ENCODE measurements at regions of chr2 and their contacts with region 1.

Region 1: DNA sequence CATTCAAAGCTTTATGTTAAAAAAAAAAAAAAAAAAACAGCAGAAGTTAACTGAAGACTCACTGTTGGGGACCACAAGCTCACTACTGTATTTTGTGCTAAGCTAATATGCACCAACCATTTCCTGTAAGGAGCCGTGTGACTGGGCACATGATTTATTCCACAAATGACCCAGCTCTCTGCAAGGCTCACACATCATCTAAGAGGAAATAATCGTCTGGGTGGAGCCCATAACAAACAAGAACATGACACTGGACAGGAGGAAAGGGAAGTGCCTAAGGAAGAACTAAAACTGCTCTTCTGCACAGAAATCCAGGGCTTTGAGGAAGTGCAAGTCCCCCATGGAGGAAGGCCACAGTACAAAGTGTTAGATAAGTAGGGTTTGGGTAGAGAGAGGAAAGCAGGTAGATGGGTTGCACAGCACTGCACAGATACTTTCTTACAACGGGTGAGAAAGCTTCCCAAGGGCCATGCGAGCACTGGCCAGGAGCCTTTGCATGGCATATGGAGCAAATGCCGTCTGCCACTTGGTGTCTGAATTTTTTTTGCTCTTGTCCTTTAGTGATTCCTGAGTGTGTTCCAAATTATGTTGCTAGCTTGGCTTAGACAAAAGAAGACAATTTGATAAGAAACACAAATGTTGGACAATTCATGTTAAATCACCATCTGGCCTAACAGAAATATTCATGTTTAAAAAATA is 24.4 kb downstream of the NFE2L2 start:
- DNase-seq: peak in 2 of 9 donors; percentile 28 to 40
- ATAC-seq: peak; percentile 91
- H3K4me3 ChIP-seq: no peak overlapping the region
- H3K4me3 Mint-ChIP-seq: peak overlapping the region; percentile 46 to 84 (median 67)
- H3K27ac ChIP-seq: peak overlapping the region; percentile 64
- H3K27ac Mint-ChIP-seq: peak overlapping the region; percentile 78 to 90 (median 86)
- H3K4me1 ChIP-seq: peaks cover 38 to 52% of the 10 kb centered on the region in 2 donors
- H3K4me1 Mint-ChIP-seq: peaks cover 60 to 91% (median 79%) of the 10 kb centered on the region in 7 donors
- H3K27me3 ChIP-seq: no peaks in the 10 kb centered on the region
- H3K27me3 Mint-ChIP-seq: no peaks in the 10 kb centered on the region

Region 2: GRCh38 chr2:177229448-177230242 is 10.4 kb before region 1 on chr2:
- CTCF ChIA-PET with region 1: no interaction called
- POLR2A ChIA-PET with region 1: interaction called, 3 read pairs
- intact Hi-C with region 1: loop called in 1 of 2 experiments (anchors 1 kb)
- DNase-seq: no peak
- ATAC-seq: no peak
- H3K4me3 ChIP-seq: no peak overlapping the region
- H3K4me3 Mint-ChIP-seq: no peak overlapping the region
- H3K27ac ChIP-seq: no peak overlapping the region
- H3K27ac Mint-ChIP-seq: peak overlapping the region; percentile 36 to 87 (median 74)
- H3K4me1 ChIP-seq: no peaks in the 10 kb centered on the region
- H3K4me1 Mint-ChIP-seq: peaks cover 21 to 57% (median 53%) of the 10 kb centered on the region in 7 donors
- H3K27me3 ChIP-seq: no peaks in the 10 kb centered on the region
- H3K27me3 Mint-ChIP-seq: no peaks in the 10 kb centered on the region

Region 3: GRCh38 chr2:177254433-177255226 is 14.5 kb after region 1 on chr2:
- CTCF ChIA-PET with region 1: interaction called, 3 read pairs
- POLR2A ChIA-PET with region 1: interaction called, 141 read pairs
- intact Hi-C with region 1: loop called (anchors 1 to 2 kb)
- DNase-seq: no peak
- ATAC-seq: no peak
- H3K4me3 ChIP-seq: no peak overlapping the region
- H3K4me3 Mint-ChIP-seq: peak overlapping the region; percentile 22 to 92 (median 52)
- H3K27ac ChIP-seq: peak overlapping the region; percentile 4
- H3K27ac Mint-ChIP-seq: peak overlapping the region; percentile 15 to 98 (median 52)
- H3K4me1 ChIP-seq: peaks cover 39 to 84% of the 10 kb centered on the region in 2 donors
- H3K4me1 Mint-ChIP-seq: peaks cover 70 to 99% (median 97%) of the 10 kb centered on the region in 7 donors
- H3K27me3 ChIP-seq: no peaks in the 10 kb centered on the region
- H3K27me3 Mint-ChIP-seq: no peaks in the 10 kb centered on the region

Measured in naive thymus-derived CD4-positive, alpha-beta T cell (primary cell).